ENCODE measurements at regions of chr12 and their contacts with region 1.

Region 1: GRCh38 chr12:93361151-93361919 is 16.4 kb upstream of the NUDT4 start:
- DNase-seq: no peak
- H3K4me3 ChIP-seq: no peak overlapping the region
- H3K27ac ChIP-seq: no peak overlapping the region
- H3K4me1 ChIP-seq: 0 out of 2 replicates have a peak, but pooled peaks cover 4% of the 10 kb centered on the region
- H3K27me3 ChIP-seq: no peaks in the 10 kb centered on the region
- CTCF ChIP-seq: no peak

Region 2: GRCh38 chr12:91846466-91847055 is 1514.8 kb before region 1 on chr12:
- CTCF ChIA-PET with region 1: no interaction called
- POLR2A ChIA-PET with region 1: no interaction called
- intact Hi-C with region 1: loop called (anchors 5 kb)
- DNase-seq: no peak
- H3K4me3 ChIP-seq: no peak overlapping the region
- H3K27ac ChIP-seq: no peak overlapping the region
- H3K4me1 ChIP-seq: no peaks in the 10 kb centered on the region
- H3K27me3 ChIP-seq: no peaks in the 10 kb centered on the region
- CTCF ChIP-seq: no peak

Region 3: DNA sequence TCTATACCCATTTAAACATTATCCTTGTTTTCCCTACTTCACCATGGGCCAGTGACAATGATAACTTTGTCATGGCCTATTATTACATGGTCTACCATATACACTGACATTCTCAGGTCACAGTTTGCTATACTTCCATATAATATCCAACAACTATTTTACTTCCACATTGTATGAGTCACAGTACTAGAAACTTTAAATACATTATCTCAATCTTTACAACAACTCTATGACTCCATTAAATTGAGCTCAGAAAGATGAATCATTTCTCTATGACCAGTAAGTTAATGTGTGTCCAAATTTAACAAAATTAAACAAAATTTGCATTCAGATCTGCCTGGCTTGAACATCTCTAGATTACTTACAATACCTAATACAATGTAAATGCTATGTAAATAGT is 564.7 kb before region 1 on chr12:
- CTCF ChIA-PET with region 1: no interaction called
- POLR2A ChIA-PET with region 1: interaction called, 10 read pairs
- intact Hi-C with region 1: no loop called
- DNase-seq: no peak
- H3K4me3 ChIP-seq: no peak overlapping the region
- H3K27ac ChIP-seq: no peak overlapping the region
- H3K4me1 ChIP-seq: no peaks in the 10 kb centered on the region
- H3K27me3 ChIP-seq: no peaks in the 10 kb centered on the region
- CTCF ChIP-seq: no peak

Region 4: GRCh38 chr12:93302331-93303229 is 58.8 kb before region 1 on chr12:
- CTCF ChIA-PET with region 1: no interaction called
- POLR2A ChIA-PET with region 1: no interaction called
- intact Hi-C with region 1: no loop called
- DNase-seq: no peak
- H3K4me3 ChIP-seq: no peak overlapping the region
- H3K27ac ChIP-seq: no peak overlapping the region
- H3K4me1 ChIP-seq: no peaks in the 10 kb centered on the region
- H3K27me3 ChIP-seq: no peaks in the 10 kb centered on the region
- CTCF ChIP-seq: no peak